Activated CD8-positive, alpha-beta T cell treated with anti-CD3 and anti-CD28 coated beads, Interleukin-2, amount 10 ng/mL, durations not matched to agents 7 days and 5 days (primary cell): ENCODE measurements at regions of chr7 and their contacts with region 1.

Region 1: GRCh38 chr7:130242198-130243014 is 24.3 kb upstream of the CPA2 start:
- DNase-seq: peak; percentile 69
- ATAC-seq: peak; percentile 90
- H3K4me3 Mint-ChIP-seq: no peak overlapping the region
- H3K27ac Mint-ChIP-seq: no peak overlapping the region
- H3K4me1 Mint-ChIP-seq: peaks cover 11% of the 10 kb centered on the region
- H3K27me3 Mint-ChIP-seq: peaks cover 4% of the 10 kb centered on the region

Region 2: GRCh38 chr7:129975309-129975708 is 267.1 kb before region 1 on chr7:
- CTCF ChIA-PET with region 1: no interaction called
- POLR2A ChIA-PET with region 1: no interaction called
- DNase-seq: no peak
- ATAC-seq: no peak
- H3K4me3 Mint-ChIP-seq: no peak overlapping the region
- H3K27ac Mint-ChIP-seq: no peak overlapping the region
- H3K4me1 Mint-ChIP-seq: no peaks in the 10 kb centered on the region
- H3K27me3 Mint-ChIP-seq: peaks cover 4% of the 10 kb centered on the region

Region 3: GRCh38 chr7:130182990-130183389 is 59.4 kb before region 1 on chr7:
- CTCF ChIA-PET with region 1: no interaction called
- POLR2A ChIA-PET with region 1: no interaction called
- DNase-seq: no peak
- ATAC-seq: no peak
- H3K4me3 Mint-ChIP-seq: no peak overlapping the region
- H3K27ac Mint-ChIP-seq: no peak overlapping the region
- H3K4me1 Mint-ChIP-seq: peaks cover 4% of the 10 kb centered on the region
- H3K27me3 Mint-ChIP-seq: no peaks in the 10 kb centered on the region

Region 4: GRCh38 chr7:130263130-130263529 is 20.7 kb after region 1 on chr7:
- CTCF ChIA-PET with region 1: no interaction called
- POLR2A ChIA-PET with region 1: no interaction called
- DNase-seq: no peak
- ATAC-seq: no peak
- H3K4me3 Mint-ChIP-seq: no peak overlapping the region
- H3K27ac Mint-ChIP-seq: no peak overlapping the region
- H3K4me1 Mint-ChIP-seq: no peaks in the 10 kb centered on the region
- H3K27me3 Mint-ChIP-seq: peaks cover 3% of the 10 kb centered on the region

Region 5: GRCh38 chr7:130758429-130759056 is 516.1 kb after region 1 on chr7:
- CTCF ChIA-PET with region 1: interaction called, 22 read pairs
- POLR2A ChIA-PET with region 1: no interaction called
- DNase-seq: no peak
- ATAC-seq: peak; percentile 33
- H3K4me3 Mint-ChIP-seq: no peak overlapping the region
- H3K27ac Mint-ChIP-seq: no peak overlapping the region
- H3K4me1 Mint-ChIP-seq: no peaks in the 10 kb centered on the region
- H3K27me3 Mint-ChIP-seq: peaks cover 15% of the 10 kb centered on the region